Activated T-helper 1 cell treated with anti-CD3 and anti-CD28 coated beads, Interleukin-12 subunit alpha, Interleukin-12 subunit beta, Interleukin-2, Interleukin-4 antibody, amounts not matched to agents 30 ng/mL and 10 ng/mL and 1 ng/mL, durations not matched to agents 14 hours and 24 hours and 36 hours (primary cell): ENCODE measurements at regions of chr2 and their contacts with region 1.

Region 1: GRCh38 chr2:102276549-102277201 is 34.7 kb upstream of the IL1RL1 start:
- DNase-seq: no peak
- H3K4me3 Mint-ChIP-seq: peak overlapping the region; percentile 54
- H3K27ac Mint-ChIP-seq: peak overlapping the region; percentile 73
- H3K4me1 Mint-ChIP-seq: peaks cover 71% of the 10 kb centered on the region
- H3K27me3 Mint-ChIP-seq: no peaks in the 10 kb centered on the region

Region 2: GRCh38 chr2:102206666-102207341 is 69.9 kb before region 1 on chr2:
- intact Hi-C with region 1: no loop called
- DNase-seq: no peak
- H3K4me3 Mint-ChIP-seq: no peak overlapping the region
- H3K27ac Mint-ChIP-seq: no peak overlapping the region
- H3K4me1 Mint-ChIP-seq: no peaks in the 10 kb centered on the region
- H3K27me3 Mint-ChIP-seq: peaks cover 9% of the 10 kb centered on the region

Region 3: GRCh38 chr2:102291318-102292251 is 14.9 kb after region 1 on chr2:
- intact Hi-C with region 1: loop called (anchors 2 kb)
- DNase-seq: no peak
- H3K4me3 Mint-ChIP-seq: peak overlapping the region; percentile 15
- H3K27ac Mint-ChIP-seq: peak overlapping the region; percentile 20
- H3K4me1 Mint-ChIP-seq: peaks cover 55% of the 10 kb centered on the region
- H3K27me3 Mint-ChIP-seq: no peaks in the 10 kb centered on the region